Right lobe of liver (tissue), 6 donors: ENCODE measurements at regions of chr10 and their contacts with region 1.

Region 1: DNA sequence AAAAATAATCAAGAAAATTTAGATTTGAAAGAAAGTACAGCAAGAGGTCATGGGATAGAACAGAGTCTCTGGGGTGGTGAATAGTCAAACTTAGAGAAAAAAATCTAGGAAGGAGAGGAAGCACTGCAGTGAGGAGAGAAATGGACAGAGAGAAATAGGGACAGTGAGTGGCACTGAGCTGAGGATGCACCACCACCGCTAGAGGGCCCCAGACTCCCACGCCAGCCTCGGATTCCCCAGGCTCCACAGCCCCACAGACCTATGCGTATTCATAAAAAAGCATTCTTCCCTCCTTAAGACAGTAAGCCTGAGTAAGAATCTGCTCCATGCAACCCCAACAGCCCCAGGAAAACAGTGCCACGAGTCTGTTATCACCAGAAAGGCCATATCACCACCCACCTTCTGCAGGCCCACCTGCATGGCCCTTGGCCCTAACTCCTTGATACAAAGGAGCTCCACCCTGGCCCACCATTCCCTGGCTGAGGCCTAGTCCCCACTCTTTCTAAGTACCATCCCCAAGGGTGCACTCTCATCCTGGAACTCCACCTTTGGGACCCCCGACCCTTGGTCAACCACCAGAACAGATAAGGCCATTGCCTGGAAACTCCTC is 91.0 kb downstream of the ALOX5 start:
- DNase-seq: peak; percentile 78 to 84 (median 83)
- ATAC-seq: peak; percentile 95 to 97 (median 96)
- H3K4me3 ChIP-seq: no peak overlapping the region
- H3K27ac ChIP-seq: no peak overlapping the region
- H3K4me1 ChIP-seq: peaks cover 0 to 35% (median 12%) of the 10 kb centered on the region in 4 donors
- H3K27me3 ChIP-seq: no peaks in the 10 kb centered on the region
- CTCF ChIP-seq: peak; percentile 88 to 94 (median 92)
- POLR2A ChIP-seq: no peak

Region 2: DNA sequence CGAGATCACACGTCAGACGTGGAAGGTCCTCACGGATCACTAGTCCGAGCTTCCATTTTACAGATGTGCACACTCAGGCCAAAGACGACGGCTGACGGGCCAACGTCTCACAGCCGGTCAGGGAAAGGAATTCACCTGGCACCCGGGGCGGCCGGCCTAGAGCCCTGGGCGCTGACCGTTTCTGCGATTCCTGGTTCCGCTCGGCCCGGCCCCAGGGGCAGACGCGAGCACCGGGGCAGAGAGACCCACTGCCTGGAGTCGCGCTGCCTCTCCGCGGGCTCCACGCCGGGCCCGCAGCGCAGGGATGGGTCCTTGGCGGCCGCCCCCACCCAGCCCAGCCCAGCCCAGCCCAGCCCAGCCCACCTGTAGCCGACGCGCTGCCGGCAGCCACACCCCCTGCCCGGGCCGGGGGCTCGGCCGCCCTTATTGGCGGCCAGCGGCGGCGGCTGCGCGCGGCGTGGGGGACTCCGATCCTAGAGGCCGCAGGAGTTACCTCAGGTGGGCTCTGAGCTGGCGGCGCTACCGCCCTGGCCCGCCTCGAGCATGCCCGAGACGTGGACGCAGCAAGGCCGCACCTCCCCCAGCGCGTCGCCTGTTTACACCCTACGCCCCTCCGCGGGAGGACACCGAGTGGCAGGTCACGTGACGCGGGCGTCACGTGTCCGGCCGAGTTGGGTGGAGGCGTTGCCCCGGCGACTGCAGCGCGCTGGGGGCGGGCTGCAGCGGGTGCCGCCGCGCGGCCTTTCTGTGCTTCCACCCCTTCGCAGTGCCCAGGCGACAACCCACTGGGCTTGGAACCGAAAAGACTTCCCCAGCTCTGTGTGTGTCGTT is 129.4 kb after region 1 on chr10:
- intact Hi-C with region 1: loop called in 1 of 2 experiments (anchors 10 kb)
- DNase-seq: peak; percentile 94 to 96 (median 96)
- ATAC-seq: peak; percentile 93 to 96 (median 94)
- H3K4me3 ChIP-seq: peak overlapping the region; percentile 63 to 80 (median 79)
- H3K27ac ChIP-seq: peak overlapping the region; percentile 63 to 77 (median 64)
- H3K4me1 ChIP-seq: peaks cover 0 to 27% (median 8%) of the 10 kb centered on the region in 4 donors
- H3K27me3 ChIP-seq: no peaks in the 10 kb centered on the region
- CTCF ChIP-seq: no peak
- POLR2A ChIP-seq: peak; percentile 38

Region 3: DNA sequence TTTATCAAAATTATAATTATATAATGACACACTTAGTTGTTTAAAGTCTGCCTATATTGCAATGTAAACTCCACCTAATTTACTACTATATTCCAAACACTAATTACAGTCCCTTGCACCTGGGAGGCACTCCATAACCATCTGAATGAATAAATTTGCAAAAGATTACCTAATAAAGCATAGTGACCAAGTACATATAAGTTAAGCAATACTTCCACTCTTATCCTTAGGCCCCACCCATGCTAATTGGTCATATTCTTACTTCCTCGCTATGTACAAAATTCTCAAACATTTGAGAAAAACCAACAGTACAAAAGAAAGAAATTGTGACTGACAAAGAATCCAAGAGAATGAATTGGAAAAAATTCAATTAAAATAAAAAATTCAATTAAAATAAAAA is 142.2 kb after region 1 on chr10:
- intact Hi-C with region 1: no loop called
- DNase-seq: no peak
- ATAC-seq: no peak
- H3K4me3 ChIP-seq: no peak overlapping the region
- H3K27ac ChIP-seq: no peak overlapping the region
- H3K4me1 ChIP-seq: no peaks in the 10 kb centered on the region
- H3K27me3 ChIP-seq: no peaks in the 10 kb centered on the region
- CTCF ChIP-seq: no peak
- POLR2A ChIP-seq: no peak

Region 4: GRCh38 chr10:45672181-45673073 is 207.4 kb after region 1 on chr10 and contains the start of gene ZFAND4:
- intact Hi-C with region 1: loop called (anchors 10 kb)
- DNase-seq: peak; percentile 99
- ATAC-seq: peak; percentile 93 to 97 (median 94)
- H3K4me3 ChIP-seq: peak within 1 kb of the TSS; percentile 60 to 71 (median 68)
- H3K27ac ChIP-seq: peak within 1 kb of the TSS; percentile 90 to 96 (median 92)
- H3K4me1 ChIP-seq: no peaks in the 10 kb centered on the region
- H3K27me3 ChIP-seq: no peaks in the 10 kb centered on the region
- CTCF ChIP-seq: peak; percentile 70 to 97 (median 82)
- POLR2A ChIP-seq: peak; percentile 88
- total RNA-seq, gene ZFAND4: 6.3 to 15.2 (median 9.3) TPM